ENCODE measurements at regions of chr5 and their contacts with region 1.

Region 1: GRCh38 chr5:145697251-145697990 is 137.7 kb downstream of the PRELID2 start:
- DNase-seq: no peak
- ATAC-seq: no peak
- H3K4me3 ChIP-seq: no peak overlapping the region
- H3K27ac ChIP-seq: no peak overlapping the region
- H3K4me1 ChIP-seq: peaks cover 0 to 4% (median 0%) of the 10 kb centered on the region in 9 donors
- H3K27me3 ChIP-seq: no peaks in the 10 kb centered on the region
- CTCF ChIP-seq: peak in 8 of 9 donors; percentile 15 to 57 (median 43)

Region 2: DNA sequence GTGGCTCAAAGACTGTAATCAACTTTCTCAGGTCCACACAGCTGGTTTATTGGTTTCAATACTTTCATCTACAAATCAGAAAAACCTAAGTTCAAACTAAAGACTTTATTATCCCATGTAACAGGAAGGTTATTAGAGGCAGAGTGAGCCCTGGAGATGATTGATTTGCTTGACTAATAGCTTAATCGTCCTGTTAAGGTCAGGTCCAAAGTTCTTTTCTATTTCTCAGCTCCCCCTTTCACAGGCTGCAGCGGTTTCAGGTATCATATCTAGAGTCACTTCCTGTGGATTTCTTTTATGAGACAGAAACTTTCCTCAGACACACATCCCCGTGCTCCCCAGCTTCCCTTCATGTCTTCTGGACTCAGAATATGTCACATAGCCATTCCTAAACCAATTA is 28.7 kb before region 1 on chr5:
- intact Hi-C with region 1: loop called in 1 of 10 experiments (anchors 1 kb)
- DNase-seq: no peak
- ATAC-seq: no peak
- H3K4me3 ChIP-seq: no peak overlapping the region
- H3K27ac ChIP-seq: no peak overlapping the region
- H3K4me1 ChIP-seq: no peaks in the 10 kb centered on the region
- H3K27me3 ChIP-seq: no peaks in the 10 kb centered on the region
- CTCF ChIP-seq: no peak

Region 3: GRCh38 chr5:145801195-145801594 is 103.8 kb after region 1 on chr5:
- intact Hi-C with region 1: no loop called
- DNase-seq: no peak
- ATAC-seq: no peak
- H3K4me3 ChIP-seq: no peak overlapping the region
- H3K27ac ChIP-seq: no peak overlapping the region
- H3K4me1 ChIP-seq: no peaks in the 10 kb centered on the region
- H3K27me3 ChIP-seq: no peaks in the 10 kb centered on the region
- CTCF ChIP-seq: no peak

Region 4: DNA sequence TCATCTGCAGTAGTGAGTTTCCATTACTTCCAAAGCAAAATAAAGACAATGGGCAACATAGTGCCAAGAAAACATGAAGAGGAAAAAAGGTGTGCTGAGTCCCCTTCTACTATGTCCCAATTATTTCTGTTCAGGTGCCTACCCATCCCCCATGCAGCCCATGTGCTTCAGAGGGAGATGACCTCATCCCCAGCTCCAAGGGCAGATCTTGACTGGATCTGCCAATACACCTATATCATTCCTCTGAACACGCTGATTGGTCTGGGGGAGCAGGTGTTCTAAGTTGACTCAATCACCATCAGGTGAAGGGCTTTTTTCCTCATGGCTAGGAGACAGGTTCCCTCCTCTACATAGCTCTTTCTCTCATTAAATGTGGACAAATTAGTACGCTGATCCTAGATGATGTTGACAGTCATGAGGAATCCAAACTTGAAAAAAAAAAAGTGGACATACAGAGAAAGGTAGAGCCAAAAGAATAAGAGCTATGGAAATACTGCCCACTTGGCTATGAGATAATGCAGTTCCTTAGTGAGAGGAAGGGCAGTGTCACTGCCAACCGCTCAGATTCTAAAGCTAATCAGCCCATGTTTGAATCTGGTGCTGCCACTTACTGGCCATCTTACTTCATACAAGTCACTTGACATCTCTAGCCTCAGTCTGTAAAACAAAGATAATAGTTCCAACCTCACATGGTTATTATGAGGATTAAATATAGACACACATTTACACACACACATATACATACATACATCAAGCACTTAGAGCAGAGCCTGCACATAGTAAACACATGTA is 114.6 kb after region 1 on chr5:
- intact Hi-C with region 1: loop called in 1 of 10 experiments (anchors 5 kb)
- DNase-seq: peak in 1 of 2 donors; percentile 12
- ATAC-seq: peak in 7 of 8 donors; percentile 49 to 91 (median 63)
- H3K4me3 ChIP-seq: no peak overlapping the region
- H3K27ac ChIP-seq: no peak overlapping the region
- H3K4me1 ChIP-seq: peaks cover 0 to 4% (median 0%) of the 10 kb centered on the region in 9 donors
- H3K27me3 ChIP-seq: no peaks in the 10 kb centered on the region
- CTCF ChIP-seq: peak in 6 of 9 donors; percentile 26 to 50 (median 40)

Region 5: DNA sequence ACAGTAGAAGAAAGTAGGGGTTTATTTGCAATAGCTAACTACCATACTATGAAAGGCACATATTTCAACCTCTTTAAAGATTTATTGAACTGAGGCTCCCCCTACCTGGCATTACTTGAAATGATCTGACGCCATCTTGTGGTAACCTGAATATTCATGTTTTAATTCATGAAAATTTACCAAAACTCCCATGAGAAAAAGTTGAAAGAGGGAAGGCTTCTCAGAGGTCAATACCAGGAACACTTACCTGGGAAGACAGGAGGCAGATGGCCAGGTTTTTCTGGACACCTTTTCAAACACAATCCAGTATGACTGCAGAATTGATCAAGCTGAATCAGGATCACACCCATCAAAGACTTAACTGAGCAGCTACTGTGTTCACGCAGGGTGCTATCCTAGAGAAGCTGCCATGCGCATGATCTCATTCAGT is 128.3 kb after region 1 on chr5:
- intact Hi-C with region 1: loop called in 2 of 10 experiments (anchors 5 to 10 kb)
- DNase-seq: no peak
- ATAC-seq: peak in 1 of 8 donors; percentile 41
- H3K4me3 ChIP-seq: no peak overlapping the region
- H3K27ac ChIP-seq: no peak overlapping the region
- H3K4me1 ChIP-seq: peaks cover 0 to 14% (median 10%) of the 10 kb centered on the region in 9 donors
- H3K27me3 ChIP-seq: no peaks in the 10 kb centered on the region
- CTCF ChIP-seq: peak; percentile 29 to 91 (median 80)

Measured in heart right ventricle (tissue), 16 donors.